Posterior vena cava (tissue), 2 donors: ENCODE measurements at regions of chr10 and their contacts with region 1.

Region 1: DNA sequence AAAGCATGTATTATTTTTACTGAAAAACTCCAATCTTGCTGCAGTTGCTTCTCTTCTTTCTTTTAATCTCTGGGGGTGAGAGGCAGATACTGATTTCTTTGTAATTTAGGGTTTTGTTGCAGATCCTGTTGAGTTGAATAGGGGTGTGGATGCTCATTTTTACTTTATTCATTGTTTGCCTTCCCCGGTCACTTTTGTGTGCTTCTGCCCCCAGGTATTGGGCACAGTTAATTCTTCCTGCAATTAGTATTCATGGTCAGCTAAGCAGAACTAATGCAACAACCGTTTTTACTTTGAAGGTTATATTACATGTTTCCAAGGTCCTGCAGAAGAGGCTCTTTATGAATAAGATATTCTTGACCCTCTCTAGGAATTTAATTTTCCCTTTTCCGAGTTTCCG is 96.4 kb downstream of the BUB3 start:
- DNase-seq: no peak

Region 2: DNA sequence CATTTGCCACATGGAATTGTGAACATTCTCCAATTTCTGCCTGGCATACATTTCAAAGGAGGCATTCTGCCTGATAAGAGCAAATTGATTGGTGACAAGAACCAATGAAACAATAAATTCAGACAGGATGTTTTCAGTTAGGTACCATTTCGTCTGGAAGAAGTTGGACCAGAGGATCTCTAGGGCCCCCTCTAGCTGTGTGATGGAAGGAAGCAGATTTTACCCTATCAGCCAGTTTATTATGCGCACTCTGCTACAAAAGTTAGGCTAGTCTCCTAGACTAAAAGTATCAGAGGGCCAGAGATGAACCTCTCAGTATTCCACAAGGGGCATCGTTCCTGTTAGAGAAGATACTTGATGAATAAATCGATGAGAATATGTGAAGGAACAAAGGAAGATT is 21.5 kb after region 1 on chr10:
- intact Hi-C with region 1: loop called in 1 of 2 experiments (anchors 1 kb)
- DNase-seq: no peak